RWPE1 (cell line): ENCODE measurements at regions of chr5 and their contacts with region 1.

Region 1: DNA sequence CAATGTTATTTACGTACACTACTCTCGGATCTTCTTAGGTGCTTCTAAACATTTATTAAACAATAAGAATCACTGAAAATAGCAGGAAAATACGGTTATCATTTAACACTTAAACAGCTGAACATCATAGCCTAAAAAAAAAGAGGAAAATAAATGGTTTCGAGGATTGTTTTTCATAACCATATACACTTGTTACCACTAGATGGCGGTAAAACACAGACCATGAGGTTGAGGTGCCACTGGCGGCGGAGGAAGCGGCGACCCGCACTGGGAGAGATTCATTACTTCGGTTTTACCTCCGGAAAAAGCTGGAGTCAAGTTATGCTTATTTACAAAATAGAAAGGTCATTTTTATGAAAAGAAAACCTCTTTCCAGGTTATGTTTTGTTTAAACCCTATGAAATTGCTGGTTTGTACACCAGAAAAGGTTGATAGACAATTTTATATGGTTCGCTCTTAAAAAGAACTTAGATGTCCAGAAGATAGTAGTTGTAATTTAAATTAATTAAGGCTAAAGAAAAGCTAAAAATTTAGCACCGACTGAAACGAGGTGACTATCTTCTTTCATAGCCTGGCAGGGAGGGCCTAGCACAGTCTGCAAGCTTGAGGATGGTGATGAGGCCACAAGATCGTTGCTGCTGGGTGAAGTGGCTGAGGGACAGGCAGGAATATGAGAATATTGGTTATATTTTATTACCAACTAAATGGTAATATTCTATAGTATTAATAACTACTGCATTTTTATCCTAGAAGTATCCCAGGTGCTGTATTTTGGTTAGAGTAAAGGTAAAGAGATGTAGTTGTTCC is 605.7 kb downstream of the RAB3C start:
- DNase-seq: peak; percentile 70
- H3K27ac ChIP-seq: no peak overlapping the region
- CTCF ChIP-seq: peak; percentile 81

Region 2: GRCh38 chr5:59174248-59174844 is 14.3 kb before region 1 on chr5:
- CTCF ChIA-PET with region 1: interaction called, 14 read pairs
- POLR2A ChIA-PET with region 1: no interaction called
- DNase-seq: peak; percentile 71
- H3K27ac ChIP-seq: no peak overlapping the region
- CTCF ChIP-seq: peak; percentile 93

Region 3: DNA sequence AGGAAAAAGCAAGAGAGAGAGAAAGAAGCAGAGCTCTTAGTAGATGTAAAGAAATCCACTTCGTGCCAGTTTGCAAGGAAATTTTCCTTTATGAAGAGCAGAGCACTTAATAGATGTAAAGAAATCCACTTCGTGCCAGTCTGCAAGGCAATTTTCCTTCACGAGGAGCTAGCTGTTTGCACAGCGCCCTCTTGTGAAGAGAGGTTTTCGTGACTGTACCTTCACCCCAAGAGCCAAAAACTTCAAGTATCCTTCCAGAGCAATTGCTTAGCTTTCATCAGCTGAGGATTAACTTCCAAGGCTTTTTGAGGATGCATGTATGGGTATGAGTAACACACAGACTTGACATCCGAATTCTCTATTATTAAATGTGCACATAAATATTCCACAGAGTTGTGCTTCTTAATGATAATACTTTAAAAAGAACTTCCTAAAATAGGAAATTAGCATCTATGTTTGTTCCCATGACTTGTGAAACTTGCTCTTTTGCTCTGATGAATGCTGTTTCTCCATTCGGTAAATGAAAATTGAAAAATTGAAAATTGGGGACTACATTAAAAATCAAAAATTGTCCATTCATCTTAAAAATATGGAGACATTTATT is 179.3 kb after region 1 on chr5:
- CTCF ChIA-PET with region 1: interaction called, 33 read pairs
- POLR2A ChIA-PET with region 1: no interaction called
- DNase-seq: peak; percentile 44
- H3K27ac ChIP-seq: no peak overlapping the region
- CTCF ChIP-seq: peak; percentile 83

Region 4: DNA sequence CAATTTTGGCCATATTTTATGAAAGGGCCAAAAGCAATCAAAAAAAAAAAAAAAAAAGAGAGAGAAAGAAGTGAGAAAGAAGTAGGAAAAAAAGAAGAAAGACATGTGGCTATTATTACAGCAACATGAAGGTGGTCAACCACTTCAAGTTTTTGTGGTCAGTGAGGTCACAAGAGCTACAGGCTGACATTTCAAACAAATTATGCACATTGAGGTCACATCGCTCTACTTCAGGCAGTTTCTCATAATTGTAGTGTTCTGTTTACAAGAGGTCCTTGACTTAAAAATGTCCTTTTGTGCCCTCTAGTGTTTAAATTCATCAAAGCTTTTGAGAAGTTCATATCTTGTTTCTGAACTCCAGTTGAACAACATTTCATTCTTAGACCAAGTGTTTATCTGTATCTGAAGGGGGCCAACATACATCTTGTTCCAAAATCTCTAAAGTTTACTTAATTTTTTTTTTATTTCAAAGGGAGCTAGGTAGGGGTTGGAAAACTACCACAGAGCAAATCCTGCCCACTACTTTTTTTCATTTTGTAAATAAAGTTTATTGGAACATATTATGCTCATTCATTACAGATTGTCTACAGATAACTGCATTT is 191.8 kb after region 1 on chr5:
- CTCF ChIA-PET with region 1: interaction called, 78 read pairs
- POLR2A ChIA-PET with region 1: interaction called, 3 read pairs
- DNase-seq: peak; percentile 42
- H3K27ac ChIP-seq: no peak overlapping the region
- CTCF ChIP-seq: peak; percentile 71

Region 5: GRCh38 chr5:59416451-59416850 is 227.8 kb after region 1 on chr5:
- CTCF ChIA-PET with region 1: no interaction called
- POLR2A ChIA-PET with region 1: interaction called, 12 read pairs
- DNase-seq: no peak
- H3K27ac ChIP-seq: no peak overlapping the region
- CTCF ChIP-seq: no peak